ENCODE measurements at regions of chr7 and their contacts with region 1.

Region 1: DNA sequence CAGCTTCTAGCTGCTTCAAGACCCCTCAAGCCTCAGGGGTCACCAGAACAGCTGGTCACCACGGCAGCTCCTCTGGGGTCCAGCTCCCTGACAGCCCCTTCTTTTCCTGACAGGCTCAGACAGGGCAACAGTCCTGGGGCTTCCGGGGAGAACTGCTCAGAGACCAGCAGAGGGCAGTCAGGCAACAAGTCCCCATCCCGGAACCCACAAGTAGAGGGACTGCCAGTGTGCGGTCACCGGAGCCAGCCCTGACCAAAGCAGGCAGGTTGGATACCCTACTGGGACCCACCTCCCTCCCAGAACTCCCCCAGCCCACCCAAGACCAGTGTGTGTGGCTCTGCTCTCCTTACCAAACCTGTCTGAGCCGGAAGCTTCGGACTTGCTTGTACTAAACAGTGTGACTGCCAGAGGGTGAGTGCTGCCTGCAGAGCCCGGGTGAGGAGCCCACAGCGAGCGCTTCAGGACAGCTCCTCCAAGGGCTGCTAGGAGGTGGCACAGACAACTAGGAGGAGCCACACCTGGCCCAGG is 40.3 kb downstream of the YKT6 start:
- DNase-seq: peak; percentile 64
- H3K4me3 ChIP-seq: peak overlapping the region in 2 of 3 experiments; percentile 10 to 15
- H3K27ac ChIP-seq: no peak overlapping the region
- H3K4me1 ChIP-seq: peaks cover 8% of the 10 kb centered on the region
- H3K27me3 ChIP-seq: no peaks in the 10 kb centered on the region
- CTCF ChIP-seq: peak; percentile 63 to 87

Region 2: GRCh38 chr7:43750016-43750887 is 490.8 kb before region 1 on chr7:
- CTCF ChIA-PET with region 1: no interaction called
- dilution Hi-C with region 1: no loop called
- in situ Hi-C with region 1: no loop called
- intact Hi-C with region 1: no loop called
- DNase-seq: no peak
- H3K4me3 ChIP-seq: no peak overlapping the region
- H3K27ac ChIP-seq: no peak overlapping the region
- H3K4me1 ChIP-seq: no peaks in the 10 kb centered on the region
- H3K27me3 ChIP-seq: no peaks in the 10 kb centered on the region
- CTCF ChIP-seq: no peak

Region 3: DNA sequence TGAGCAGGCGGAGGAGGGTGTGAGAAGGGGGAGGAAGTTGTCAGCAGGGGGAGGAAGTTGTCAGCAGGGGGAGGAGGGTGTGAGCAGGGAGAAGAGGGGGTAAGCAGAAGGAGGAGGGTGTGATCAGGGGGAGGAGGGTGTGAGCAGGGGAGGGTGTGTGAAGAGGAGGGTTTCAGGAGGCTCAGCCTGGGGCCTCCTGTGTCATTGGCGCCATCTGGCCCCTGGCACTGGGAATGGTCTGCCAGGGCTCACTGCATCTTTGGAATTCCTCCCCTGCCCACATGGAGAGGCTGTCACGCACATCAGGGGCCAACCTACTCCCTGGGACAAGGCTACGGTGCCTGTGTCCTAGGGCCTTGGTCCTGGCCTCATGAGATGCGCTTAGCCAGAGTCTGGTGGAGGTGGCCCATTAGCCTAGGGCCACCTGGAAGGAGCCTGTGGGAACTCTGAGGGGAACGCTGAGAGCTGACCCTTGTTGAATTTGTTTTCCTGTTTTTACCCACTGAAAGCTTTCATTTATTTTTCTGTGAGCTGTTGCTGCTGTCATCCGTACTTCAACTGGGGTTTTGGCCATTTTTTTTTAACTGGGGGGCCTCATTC is 66.4 kb after region 1 on chr7:
- CTCF ChIA-PET with region 1: no interaction called
- dilution Hi-C with region 1: loop called (anchors 10 kb)
- in situ Hi-C with region 1: no loop called
- intact Hi-C with region 1: loop called (anchors 1 kb)
- DNase-seq: peak; percentile 33
- H3K4me3 ChIP-seq: no peak overlapping the region
- H3K27ac ChIP-seq: peak overlapping the region; percentile 58
- H3K4me1 ChIP-seq: peaks cover 18% of the 10 kb centered on the region
- H3K27me3 ChIP-seq: no peaks in the 10 kb centered on the region
- CTCF ChIP-seq: peak; percentile 27 to 44

Region 4: GRCh38 chr7:44383566-44383965 is 142.5 kb after region 1 on chr7:
- CTCF ChIA-PET with region 1: no interaction called
- dilution Hi-C with region 1: loop called (anchors 5 kb)
- in situ Hi-C with region 1: no loop called
- intact Hi-C with region 1: no loop called
- DNase-seq: no peak
- H3K4me3 ChIP-seq: no peak overlapping the region
- H3K27ac ChIP-seq: no peak overlapping the region
- H3K4me1 ChIP-seq: peaks cover 26% of the 10 kb centered on the region
- H3K27me3 ChIP-seq: no peaks in the 10 kb centered on the region
- CTCF ChIP-seq: no peak

Region 5: GRCh38 chr7:44460325-44460724 is 219.3 kb after region 1 on chr7:
- CTCF ChIA-PET with region 1: no interaction called
- dilution Hi-C with region 1: loop called (anchors 10 kb)
- in situ Hi-C with region 1: no loop called
- intact Hi-C with region 1: no loop called
- DNase-seq: peak; percentile 30
- H3K4me3 ChIP-seq: no peak overlapping the region
- H3K27ac ChIP-seq: no peak overlapping the region
- H3K4me1 ChIP-seq: peaks cover 20% of the 10 kb centered on the region
- H3K27me3 ChIP-seq: no peaks in the 10 kb centered on the region
- CTCF ChIP-seq: no peak

Region 6: GRCh38 chr7:44490351-44491200 is 249.5 kb after region 1 on chr7 and contains the start of gene NUDCD3:
- CTCF ChIA-PET with region 1: no interaction called
- dilution Hi-C with region 1: no loop called
- in situ Hi-C with region 1: loop called in 1 of 2 experiments (anchors 25 kb)
- intact Hi-C with region 1: no loop called
- DNase-seq: peak; percentile 87
- H3K4me3 ChIP-seq: peak within 1 kb of the TSS; percentile 68 to 87 (median 83)
- H3K27ac ChIP-seq: peak within 1 kb of the TSS; percentile 97
- H3K4me1 ChIP-seq: peaks cover 19% of the 10 kb centered on the region
- H3K27me3 ChIP-seq: no peaks in the 10 kb centered on the region
- CTCF ChIP-seq: peak in 1 of 2 donors; percentile 32
- total RNA-seq, gene NUDCD3: 77.2 to 122 TPM